ENCODE measurements at regions of chr14 and their contacts with region 1.

Region 1: GRCh38 chr14:23294734-23295561 is 7.7 kb downstream of the PPP1R3E start:
- DNase-seq: no peak
- H3K4me3 ChIP-seq: no peak overlapping the region
- H3K27ac ChIP-seq: no peak overlapping the region
- H3K27me3 ChIP-seq: peaks cover 6% of the 10 kb centered on the region
- CTCF ChIP-seq: peak; percentile 80

Region 2: GRCh38 chr14:23228812-23229211 is 66.1 kb before region 1 on chr14:
- CTCF ChIA-PET with region 1: no interaction called
- POLR2A ChIA-PET with region 1: no interaction called
- DNase-seq: no peak
- H3K4me3 ChIP-seq: no peak overlapping the region
- H3K27ac ChIP-seq: no peak overlapping the region
- H3K27me3 ChIP-seq: no peaks in the 10 kb centered on the region
- CTCF ChIP-seq: no peak

Region 3: DNA sequence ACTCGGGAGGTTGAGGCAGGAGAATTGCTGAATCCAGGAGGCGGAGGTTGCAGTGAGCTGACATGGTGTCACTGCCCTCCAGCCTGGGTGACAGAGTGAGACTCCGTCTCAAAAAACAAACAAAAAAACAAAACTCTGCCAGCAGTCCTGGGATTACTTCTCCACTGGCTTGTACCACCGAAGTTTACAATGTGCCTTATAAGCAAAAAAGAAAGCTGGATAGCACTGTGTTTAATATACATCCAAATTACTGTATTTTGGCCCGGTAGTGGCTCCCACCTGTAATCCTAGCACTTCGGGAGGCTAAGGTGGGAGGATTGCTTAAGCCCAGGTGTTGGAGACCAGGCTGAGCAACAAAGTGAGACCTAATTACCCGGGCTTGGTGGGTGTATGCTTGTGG is 25.8 kb before region 1 on chr14:
- CTCF ChIA-PET with region 1: interaction called, 24 read pairs
- POLR2A ChIA-PET with region 1: interaction called, 4 read pairs
- DNase-seq: no peak
- H3K4me3 ChIP-seq: no peak overlapping the region
- H3K27ac ChIP-seq: no peak overlapping the region
- H3K27me3 ChIP-seq: no peaks in the 10 kb centered on the region
- CTCF ChIP-seq: no peak

Region 4: DNA sequence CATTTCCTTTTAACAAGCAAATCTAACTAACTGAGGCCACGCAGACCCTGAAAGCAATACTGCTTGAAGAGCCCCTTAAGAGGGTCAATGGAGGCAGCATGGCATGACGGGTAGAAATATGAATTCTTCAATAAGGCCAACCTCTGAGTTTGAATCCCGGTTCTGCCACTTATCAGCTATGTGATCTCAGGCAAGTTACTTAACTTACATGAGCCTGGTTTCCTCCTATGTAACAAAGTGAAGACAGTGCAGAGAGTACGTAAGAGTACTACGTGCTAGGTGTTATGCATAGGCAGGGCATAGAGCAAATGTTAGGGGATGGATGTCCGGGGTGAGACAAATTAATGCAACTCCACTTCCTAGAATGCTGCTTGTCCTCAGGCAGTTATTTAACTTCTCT is 13.7 kb before region 1 on chr14:
- CTCF ChIA-PET with region 1: interaction called, 20 read pairs
- POLR2A ChIA-PET with region 1: no interaction called
- DNase-seq: no peak
- H3K4me3 ChIP-seq: no peak overlapping the region
- H3K27ac ChIP-seq: no peak overlapping the region
- H3K27me3 ChIP-seq: no peaks in the 10 kb centered on the region
- CTCF ChIP-seq: no peak

Region 5: GRCh38 chr14:23569443-23570151 is 274.6 kb after region 1 on chr14:
- CTCF ChIA-PET with region 1: no interaction called
- POLR2A ChIA-PET with region 1: no interaction called
- DNase-seq: no peak
- H3K4me3 ChIP-seq: no peak overlapping the region
- H3K27ac ChIP-seq: no peak overlapping the region
- H3K27me3 ChIP-seq: peaks cover 38% of the 10 kb centered on the region
- CTCF ChIP-seq: no peak; the same call in 1 of the 2 replicates

Measured in AG04450 (cell line).